Activated T-helper 2 cell treated with anti-CD3 and anti-CD28 coated beads, Interferon-gamma antibody, Interleukin-2, Interleukin-4, amounts not matched to agents 10 μg/mL and 5 μg/mL and 100 μg/mL, durations not matched to agents 14 hours and 24 hours and 36 hours (primary cell): ENCODE measurements at regions of chr14 and their contacts with region 1.

Region 1: DNA sequence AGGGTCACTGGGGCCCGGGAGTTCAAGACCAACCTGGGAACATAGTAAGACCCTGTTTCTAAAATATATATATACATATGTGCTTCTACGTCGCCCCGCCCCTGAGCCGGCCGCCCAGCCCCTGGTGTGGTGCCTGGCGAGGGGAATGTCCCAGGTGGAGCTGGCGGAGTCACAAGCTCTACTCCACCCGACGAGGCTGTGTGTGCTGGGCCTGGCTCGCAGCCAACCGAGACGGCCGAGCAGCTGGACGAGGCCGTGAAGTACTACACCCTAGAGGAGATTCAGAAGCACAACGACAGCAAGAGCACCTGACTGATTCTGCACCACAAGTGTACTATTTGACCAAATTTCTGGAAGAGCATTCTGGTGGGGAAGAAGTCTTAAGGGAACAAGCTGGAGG is 22.1 kb upstream of the ITPK1 start:
- DNase-seq: no peak
- H3K4me3 Mint-ChIP-seq: no peak overlapping the region
- H3K27ac Mint-ChIP-seq: no peak overlapping the region
- H3K4me1 Mint-ChIP-seq: peaks cover 2% of the 10 kb centered on the region
- H3K27me3 Mint-ChIP-seq: peaks cover 2% of the 10 kb centered on the region

Region 2: DNA sequence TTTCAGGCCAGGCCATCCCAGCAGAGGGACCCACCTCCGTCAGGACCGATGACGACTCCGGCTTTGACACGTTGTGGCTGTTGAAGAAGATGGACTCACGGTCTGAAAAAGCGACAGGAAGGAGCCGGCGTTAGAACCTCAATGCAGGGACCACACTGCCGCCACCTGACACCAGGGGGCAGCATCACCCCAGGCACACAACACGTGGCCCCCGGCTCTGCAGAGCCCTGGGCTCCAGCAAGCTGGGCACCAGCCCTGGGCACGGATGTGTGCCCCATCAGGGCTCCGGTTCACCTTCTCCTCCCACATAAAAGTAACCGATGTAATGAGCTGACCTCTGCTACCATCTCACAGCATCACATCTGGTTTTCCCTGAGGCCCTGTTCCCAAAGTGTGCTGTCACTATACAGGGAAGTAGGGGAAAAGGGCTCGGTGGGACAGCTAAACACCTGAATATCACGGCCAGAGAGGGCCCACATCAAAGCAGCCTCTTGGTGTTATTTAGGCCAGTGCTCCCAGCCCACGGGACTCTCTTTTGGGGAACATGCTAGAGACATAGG is 185.9 kb before region 1 on chr14:
- intact Hi-C with region 1: loop called (anchors 1 kb)
- DNase-seq: peak; percentile 70
- H3K4me3 Mint-ChIP-seq: no peak overlapping the region
- H3K27ac Mint-ChIP-seq: no peak overlapping the region
- H3K4me1 Mint-ChIP-seq: peaks cover 3% of the 10 kb centered on the region
- H3K27me3 Mint-ChIP-seq: no peaks in the 10 kb centered on the region